Activated naive CD4-positive, alpha-beta T cell treated with anti-CD3 and anti-CD28 coated beads for 36 hours (primary cell): ENCODE measurements at regions of chr10 and their contacts with region 1.

Region 1: DNA sequence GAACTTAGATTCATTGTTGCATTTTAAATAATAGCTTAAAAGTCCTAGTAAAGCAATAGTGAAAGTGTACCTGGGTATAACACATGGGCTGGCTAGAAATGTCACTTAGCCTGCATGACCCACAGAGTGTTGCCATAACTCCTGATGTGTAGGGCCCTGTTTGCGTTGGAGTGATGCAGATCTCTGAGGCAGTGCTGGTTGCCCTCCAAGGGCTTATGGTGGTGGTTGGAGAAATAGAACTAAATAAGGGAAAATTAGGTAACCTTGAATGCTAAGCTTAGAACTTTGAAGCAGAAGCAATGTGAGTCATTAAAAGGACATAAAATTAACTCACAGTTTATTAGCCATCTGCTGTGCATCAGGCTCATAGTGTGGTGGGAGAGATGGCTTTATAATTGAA is 105.7 kb downstream of the CCNY start:
- DNase-seq: peak; percentile 36
- H3K4me3 Mint-ChIP-seq: no peak overlapping the region
- H3K27ac Mint-ChIP-seq: peak overlapping the region; percentile 78
- H3K4me1 Mint-ChIP-seq: peaks cover 47% of the 10 kb centered on the region
- H3K27me3 Mint-ChIP-seq: no peaks in the 10 kb centered on the region

Region 2: GRCh38 chr10:35341521-35341920 is 100.5 kb before region 1 on chr10:
- CTCF ChIA-PET with region 1: interaction called, 4 read pairs
- intact Hi-C with region 1: loop called (anchors 1 kb)
- DNase-seq: no peak
- H3K4me3 Mint-ChIP-seq: no peak overlapping the region
- H3K27ac Mint-ChIP-seq: peak overlapping the region; percentile 11
- H3K4me1 Mint-ChIP-seq: peaks cover 74% of the 10 kb centered on the region
- H3K27me3 Mint-ChIP-seq: no peaks in the 10 kb centered on the region